A549 (cell line): ENCODE measurements at regions of chr6 and their contacts with region 1.

Region 1: GRCh38 chr6:80094017-80094416 is 12.5 kb upstream of the BCKDHB start:
- DNase-seq: peak; percentile 9 to 11
- ATAC-seq: 0 out of 6 replicates have a peak, but pooled peaks of 1 of the 2 experiments have one; percentile 40
- H3K4me3 ChIP-seq: no peak overlapping the region
- H3K27ac ChIP-seq: no peak overlapping the region
- H3K4me1 ChIP-seq: no peaks in the 10 kb centered on the region
- CTCF ChIP-seq: peak; percentile 55
- EP300 ChIP-seq: no peak
- POLR2A ChIP-seq: no peak
- RAD21 ChIP-seq: peak; percentile 59

Region 2: DNA sequence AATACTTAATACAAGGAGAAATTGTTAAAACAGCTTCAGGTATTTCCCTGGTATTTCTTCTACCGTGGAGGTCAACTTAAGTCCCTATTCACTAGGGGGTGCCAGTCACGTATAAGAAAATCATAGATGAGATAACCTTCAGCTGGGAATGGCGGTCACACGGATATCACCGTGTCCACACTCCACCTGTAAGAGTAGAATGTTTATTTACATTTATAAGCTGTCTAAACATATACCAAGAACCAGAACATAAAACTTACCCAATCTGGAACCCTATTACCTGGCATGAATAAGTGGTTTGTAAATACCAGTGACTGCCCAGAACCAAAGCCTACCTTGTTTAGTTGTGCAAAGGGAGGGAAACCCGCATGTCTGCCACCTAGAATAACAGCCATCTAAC is 144.8 kb before region 1 on chr6:
- CTCF ChIA-PET with region 1: interaction called, 11 read pairs
- POLR2A ChIA-PET with region 1: no interaction called
- DNase-seq: peak; percentile 9 to 85
- ATAC-seq: peak in 1 of 2 experiments; percentile 57; a peak in 3 of 6 replicates
- H3K4me3 ChIP-seq: no peak overlapping the region
- H3K27ac ChIP-seq: no peak overlapping the region
- H3K4me1 ChIP-seq: no peaks in the 10 kb centered on the region
- CTCF ChIP-seq: peak; percentile 55
- EP300 ChIP-seq: no peak
- POLR2A ChIP-seq: no peak
- RAD21 ChIP-seq: peak; percentile 41 to 60